Endothelial cell of umbilical vein (primary cell): ENCODE measurements at regions of chr4 and their contacts with region 1.

Region 1: GRCh38 chr4:173505924-173506518 is 24.0 kb downstream of the HAND2 start:
- DNase-seq: peak; percentile 25
- H3K4me3 ChIP-seq: no peak overlapping the region
- H3K27ac ChIP-seq: no peak overlapping the region
- H3K4me1 ChIP-seq: peaks cover 17% of the 10 kb centered on the region
- H3K27me3 ChIP-seq: peaks cover 83 to 96% of the 10 kb centered on the region in 2 experiments
- CTCF ChIP-seq: peak; percentile 57 to 71
- POLR2A ChIP-seq: no peak

Region 2: GRCh38 chr4:173752610-173753230 is 246.7 kb after region 1 on chr4:
- CTCF ChIA-PET with region 1: interaction called, 8 read pairs
- POLR2A ChIA-PET with region 1: no interaction called
- dilution Hi-C with region 1: no loop called
- intact Hi-C with region 1: loop called (anchors 1 kb)
- DNase-seq: peak; percentile 23
- H3K4me3 ChIP-seq: no peak overlapping the region
- H3K27ac ChIP-seq: no peak overlapping the region
- H3K4me1 ChIP-seq: no peaks in the 10 kb centered on the region
- H3K27me3 ChIP-seq: no peaks in the 10 kb centered on the region
- CTCF ChIP-seq: peak; percentile 43 to 45
- POLR2A ChIP-seq: no peak

Region 3: GRCh38 chr4:173834151-173834550 is 328.1 kb after region 1 on chr4:
- CTCF ChIA-PET with region 1: no interaction called
- POLR2A ChIA-PET with region 1: no interaction called
- dilution Hi-C with region 1: no loop called
- intact Hi-C with region 1: no loop called
- DNase-seq: no peak
- H3K4me3 ChIP-seq: no peak overlapping the region
- H3K27ac ChIP-seq: no peak overlapping the region
- H3K4me1 ChIP-seq: no peaks in the 10 kb centered on the region
- H3K27me3 ChIP-seq: no peaks in the 10 kb centered on the region
- CTCF ChIP-seq: no peak
- POLR2A ChIP-seq: no peak

Region 4: DNA sequence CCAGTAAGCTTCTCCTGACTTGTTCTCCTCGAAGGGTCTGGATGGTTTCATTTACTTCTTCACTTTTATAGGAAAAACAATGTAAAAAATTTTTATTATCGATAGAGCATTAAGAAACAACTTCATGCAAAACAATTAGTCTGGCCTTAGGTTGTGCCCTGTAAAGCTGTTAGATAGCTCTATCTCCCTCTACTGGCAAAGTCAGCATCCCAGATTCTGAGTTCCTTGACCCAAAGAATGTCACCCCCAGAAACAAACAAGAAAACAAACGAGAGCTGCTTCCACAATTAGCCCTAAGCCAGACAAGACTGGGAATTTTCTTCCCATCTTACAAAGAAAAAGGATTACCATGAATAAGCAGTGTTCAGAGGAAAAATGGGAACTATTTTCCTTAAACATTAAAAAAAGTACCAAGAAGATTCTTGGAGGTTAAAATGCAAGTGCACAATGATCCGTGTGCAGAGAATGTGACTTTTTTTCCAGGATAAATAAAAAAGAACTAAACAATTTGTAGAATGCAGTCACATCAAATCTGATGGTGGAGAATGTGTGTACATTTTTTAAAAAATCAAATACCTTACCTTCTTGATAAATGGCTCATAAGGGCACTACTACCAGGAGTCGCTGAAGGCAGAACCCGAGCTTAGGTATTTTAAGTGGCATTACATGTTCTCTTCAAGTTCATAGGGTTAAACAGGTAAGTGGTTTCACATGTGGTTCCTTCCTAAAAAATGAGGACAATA is 484.3 kb after region 1 on chr4:
- CTCF ChIA-PET with region 1: interaction called, 7 read pairs
- POLR2A ChIA-PET with region 1: no interaction called
- dilution Hi-C with region 1: no loop called
- intact Hi-C with region 1: loop called (anchors 1 kb)
- DNase-seq: peak; percentile 12
- H3K4me3 ChIP-seq: no peak overlapping the region
- H3K27ac ChIP-seq: no peak overlapping the region
- H3K4me1 ChIP-seq: no peaks in the 10 kb centered on the region
- H3K27me3 ChIP-seq: no peaks in the 10 kb centered on the region
- CTCF ChIP-seq: peak in 1 of 2 donors; percentile 34
- POLR2A ChIP-seq: no peak

Region 5: DNA sequence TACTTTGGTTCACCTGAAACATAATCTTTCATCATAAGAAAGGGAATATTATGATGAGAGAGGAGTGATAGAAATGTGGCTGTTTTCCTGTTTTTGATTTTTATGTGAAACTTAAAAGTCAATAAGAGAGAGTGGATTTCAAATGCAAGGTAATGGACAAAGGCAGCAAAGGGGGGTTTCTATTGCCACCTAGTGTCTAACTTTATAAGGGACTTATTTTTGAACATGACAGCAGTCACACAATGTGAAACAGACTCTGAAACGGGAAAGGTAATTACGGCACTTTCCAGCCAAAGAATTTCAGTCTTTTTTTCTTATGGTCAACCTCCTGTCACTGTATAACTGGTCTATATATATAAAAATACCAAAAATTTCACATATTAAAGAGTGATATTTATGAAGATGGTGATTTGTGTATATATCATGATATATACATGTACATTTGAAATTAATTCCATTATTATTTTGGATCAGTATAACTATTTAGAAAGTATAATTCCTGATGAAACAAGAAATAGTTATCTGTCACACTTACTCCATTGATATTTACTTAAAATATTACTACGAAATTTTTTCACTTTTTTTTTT is 650.3 kb after region 1 on chr4:
- CTCF ChIA-PET with region 1: interaction called, 10 read pairs
- POLR2A ChIA-PET with region 1: no interaction called
- dilution Hi-C with region 1: no loop called
- intact Hi-C with region 1: loop called (anchors 1 kb)
- DNase-seq: peak; percentile 62
- H3K4me3 ChIP-seq: no peak overlapping the region
- H3K27ac ChIP-seq: no peak overlapping the region
- H3K4me1 ChIP-seq: no peaks in the 10 kb centered on the region
- H3K27me3 ChIP-seq: peaks cover 2 to 8% of the 10 kb centered on the region in 2 experiments
- CTCF ChIP-seq: peak; percentile 14 to 55
- POLR2A ChIP-seq: no peak